ENCODE measurements at regions of chr13 and their contacts with region 1.

Region 1: DNA sequence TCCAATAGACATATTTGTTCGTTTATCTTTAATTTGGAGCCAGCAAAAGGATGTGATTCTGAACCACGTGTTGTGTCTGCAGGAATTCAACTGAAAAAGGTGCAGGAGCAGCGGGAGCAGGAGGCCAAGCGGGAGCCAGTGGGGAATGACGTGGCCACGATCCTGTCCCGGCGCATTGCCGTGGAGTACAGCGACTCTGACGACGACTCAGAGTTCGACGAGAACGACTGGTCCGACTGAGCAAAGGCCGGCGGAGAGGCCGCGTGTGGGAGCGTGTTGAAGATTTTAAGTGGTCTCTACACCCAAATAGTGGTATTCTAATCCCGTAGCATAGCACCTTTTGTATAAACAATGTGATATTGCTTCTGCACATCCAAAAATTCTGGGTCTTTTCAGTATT is 75.0 kb downstream of the GPR12 start:
- DNase-seq: no peak
- H3K4me3 ChIP-seq: no peak overlapping the region
- H3K4me3 Mint-ChIP-seq: no peak overlapping the region
- H3K27ac Mint-ChIP-seq: no peak overlapping the region
- H3K4me1 ChIP-seq: no peaks in the 10 kb centered on the region
- H3K4me1 Mint-ChIP-seq: no peaks in the 10 kb centered on the region
- H3K27me3 ChIP-seq: no peaks in the 10 kb centered on the region; the same call in 1 of the 2 replicates
- H3K27me3 Mint-ChIP-seq: peaks cover 15% of the 10 kb centered on the region
- CTCF ChIP-seq: no peak

Region 2: DNA sequence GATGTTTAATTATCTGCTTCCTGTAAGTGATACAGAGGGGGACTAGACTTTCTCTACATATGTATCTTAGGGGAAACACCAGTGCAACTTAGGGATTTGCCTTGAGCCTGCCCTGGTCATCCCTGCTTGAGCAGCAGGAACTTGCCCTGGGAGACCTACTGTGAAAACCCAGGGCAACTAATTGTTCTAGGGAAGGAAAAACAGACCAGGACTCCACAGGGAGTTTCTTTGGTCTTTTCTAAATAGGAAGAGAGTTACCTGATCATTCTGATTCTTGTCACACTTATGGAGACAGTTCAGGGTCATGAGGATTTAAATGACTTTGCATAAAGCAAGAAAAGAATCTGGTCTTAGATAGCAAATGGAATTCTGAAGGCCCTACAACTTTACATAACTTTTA is 39.0 kb before region 1 on chr13:
- CTCF ChIA-PET with region 1: no interaction called
- POLR2A ChIA-PET with region 1: no interaction called
- intact Hi-C with region 1: no loop called
- DNase-seq: no peak
- H3K4me3 ChIP-seq: no peak overlapping the region
- H3K4me3 Mint-ChIP-seq: no peak overlapping the region
- H3K27ac Mint-ChIP-seq: no peak overlapping the region
- H3K4me1 ChIP-seq: no peaks in the 10 kb centered on the region
- H3K4me1 Mint-ChIP-seq: no peaks in the 10 kb centered on the region
- H3K27me3 ChIP-seq: 0 out of 2 replicates have a peak, but pooled peaks cover 1% of the 10 kb centered on the region
- H3K27me3 Mint-ChIP-seq: peaks cover 19% of the 10 kb centered on the region
- CTCF ChIP-seq: no peak

Region 3: GRCh38 chr13:27367570-27367969 is 682.0 kb after region 1 on chr13:
- CTCF ChIA-PET with region 1: interaction called, 11 read pairs
- POLR2A ChIA-PET with region 1: no interaction called
- intact Hi-C with region 1: no loop called
- DNase-seq: no peak
- H3K4me3 ChIP-seq: no peak overlapping the region
- H3K4me3 Mint-ChIP-seq: no peak overlapping the region
- H3K27ac Mint-ChIP-seq: no peak overlapping the region
- H3K4me1 ChIP-seq: peaks cover 8% of the 10 kb centered on the region; the same call in 1 of the 2 replicates
- H3K4me1 Mint-ChIP-seq: peaks cover 8% of the 10 kb centered on the region
- H3K27me3 ChIP-seq: no peaks in the 10 kb centered on the region
- H3K27me3 Mint-ChIP-seq: no peaks in the 10 kb centered on the region
- CTCF ChIP-seq: no peak

Measured in Caco-2 (cell line).